Caco-2 (cell line): ENCODE measurements at regions of chr1 and their contacts with region 1.

Region 1: GRCh38 chr1:165630629-165631341 is at the start of gene MGST3:
- DNase-seq: peak; percentile 96 to 97
- H3K4me3 ChIP-seq: peak within 1 kb of the TSS; percentile 72
- H3K4me3 Mint-ChIP-seq: no peak within 1 kb of the TSS
- H3K27ac Mint-ChIP-seq: no peak within 1 kb of the TSS
- H3K4me1 ChIP-seq: peaks cover 17% of the 10 kb centered on the region
- H3K4me1 Mint-ChIP-seq: peaks cover 26% of the 10 kb centered on the region
- H3K27me3 ChIP-seq: no peaks in the 10 kb centered on the region
- H3K27me3 Mint-ChIP-seq: no peaks in the 10 kb centered on the region
- CTCF ChIP-seq: no peak
- total RNA-seq, gene MGST3: 173 and 193 TPM in 2 replicates

Region 2: DNA sequence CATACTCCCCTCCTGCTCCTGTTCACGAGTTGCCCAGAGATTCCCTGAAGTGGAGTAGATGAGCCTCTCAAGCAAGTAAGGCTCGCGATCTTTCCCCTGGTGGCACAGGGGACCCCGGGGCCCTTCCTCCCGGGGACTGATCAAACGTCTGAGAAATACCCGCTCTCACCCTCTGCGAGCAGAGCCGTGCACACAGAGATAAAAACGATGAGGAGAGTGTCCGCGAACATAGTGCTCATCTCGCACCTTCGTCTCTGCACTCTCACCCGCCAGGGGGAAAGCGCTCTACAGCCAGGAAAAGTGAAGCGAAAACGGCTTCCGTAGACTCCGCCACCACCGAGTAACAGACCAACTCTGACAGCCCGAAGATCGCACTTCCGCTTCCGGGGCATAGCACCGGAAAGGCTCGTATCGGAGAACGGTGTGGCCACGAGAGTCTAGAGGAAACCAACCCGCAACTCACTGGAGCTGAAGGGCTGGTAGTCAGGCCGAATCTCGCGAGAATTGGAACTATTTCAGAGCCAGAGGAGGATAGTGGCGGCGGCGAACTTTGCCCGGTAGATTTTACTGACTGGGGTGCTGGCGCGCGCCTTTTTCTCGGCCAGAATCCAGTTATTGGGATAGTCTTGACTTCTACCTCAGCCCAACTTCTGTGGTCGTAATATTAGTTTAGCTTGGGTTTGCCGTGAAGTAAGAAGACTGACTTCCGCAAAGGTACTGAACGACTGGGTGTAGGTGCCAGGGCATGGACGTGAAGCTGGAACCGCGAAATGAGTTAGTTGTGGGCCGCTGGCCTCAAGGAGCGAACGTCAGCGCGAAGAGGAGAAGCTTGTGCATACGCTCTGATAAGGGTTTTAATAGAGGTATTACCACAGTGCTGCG is 138.0 kb after region 1 on chr1 and contains the start of gene TMCO1:
- CTCF ChIA-PET with region 1: no interaction called
- POLR2A ChIA-PET with region 1: interaction called, 7 read pairs
- intact Hi-C with region 1: loop called (anchors 5 kb)
- DNase-seq: peak; percentile 95 to 98
- H3K4me3 ChIP-seq: peak within 1 kb of the TSS; percentile 73
- H3K4me3 Mint-ChIP-seq: peak within 1 kb of the TSS; percentile 94
- H3K27ac Mint-ChIP-seq: peak within 1 kb of the TSS; percentile 96
- H3K4me1 ChIP-seq: peaks cover 19% of the 10 kb centered on the region
- H3K4me1 Mint-ChIP-seq: peaks cover 37% of the 10 kb centered on the region
- H3K27me3 ChIP-seq: no peaks in the 10 kb centered on the region
- H3K27me3 Mint-ChIP-seq: no peaks in the 10 kb centered on the region
- CTCF ChIP-seq: no peak
- total RNA-seq, gene TMCO1: 138 and 152 TPM in 2 replicates